Activated CD8-positive, alpha-beta T cell treated with anti-CD3 and anti-CD28 coated beads for 36 hours (primary cell): ENCODE measurements at regions of chr11 and their contacts with region 1.

Region 1: GRCh38 chr11:64304316-64305072 is 830 bp upstream of the ESRRA start:
- DNase-seq: peak; percentile 99
- ATAC-seq: peak; percentile 38
- H3K4me3 Mint-ChIP-seq: peak overlapping the region; percentile 89
- H3K27ac Mint-ChIP-seq: peak overlapping the region; percentile 97
- H3K4me1 Mint-ChIP-seq: peaks cover 29% of the 10 kb centered on the region
- H3K27me3 Mint-ChIP-seq: peaks cover 18% of the 10 kb centered on the region
- CTCF ChIP-seq: peak; percentile 87

Region 2: GRCh38 chr11:64176751-64177150 is 127.7 kb before region 1 on chr11:
- CTCF ChIA-PET with region 1: no interaction called
- POLR2A ChIA-PET with region 1: no interaction called
- intact Hi-C with region 1: no loop called
- DNase-seq: no peak
- ATAC-seq: no peak
- H3K4me3 Mint-ChIP-seq: no peak overlapping the region
- H3K27ac Mint-ChIP-seq: no peak overlapping the region
- H3K4me1 Mint-ChIP-seq: peaks cover 16% of the 10 kb centered on the region
- H3K27me3 Mint-ChIP-seq: no peaks in the 10 kb centered on the region
- CTCF ChIP-seq: no peak

Region 3: DNA sequence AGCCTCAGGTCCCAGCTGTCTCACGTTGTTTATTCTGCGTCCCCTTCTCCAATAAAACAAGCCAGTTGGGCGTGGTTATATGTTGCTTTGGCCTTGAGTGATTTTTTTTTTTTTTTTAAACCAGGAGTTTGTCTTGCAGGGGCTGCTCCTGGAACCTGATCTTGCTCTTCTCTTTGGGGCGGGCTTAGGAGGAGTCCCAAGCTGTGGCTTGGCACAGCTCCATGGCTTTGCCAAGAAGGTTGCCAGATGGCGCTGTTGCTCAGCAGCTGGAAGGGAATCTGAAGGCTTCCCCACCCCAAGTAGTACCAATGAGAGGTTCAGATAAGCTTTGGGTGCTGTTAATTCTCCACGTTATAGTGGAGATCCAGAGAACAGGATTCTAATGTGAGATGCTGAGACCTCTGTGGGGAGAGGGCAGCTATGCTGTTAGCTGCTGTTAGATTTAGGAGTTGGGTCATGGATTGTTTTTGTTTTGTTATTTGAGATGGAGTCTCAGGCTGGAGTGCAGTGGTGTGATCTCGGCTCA is 100.0 kb before region 1 on chr11:
- CTCF ChIA-PET with region 1: interaction called, 111 read pairs
- POLR2A ChIA-PET with region 1: interaction called, 55 read pairs
- intact Hi-C with region 1: loop called (anchors 5 kb)
- DNase-seq: peak; percentile 87
- ATAC-seq: peak; percentile 10
- H3K4me3 Mint-ChIP-seq: peak overlapping the region; percentile 53
- H3K27ac Mint-ChIP-seq: peak overlapping the region; percentile 65
- H3K4me1 Mint-ChIP-seq: peaks cover 44% of the 10 kb centered on the region
- H3K27me3 Mint-ChIP-seq: no peaks in the 10 kb centered on the region
- CTCF ChIP-seq: peak; percentile 62

Region 4: GRCh38 chr11:64240394-64241174 is 63.9 kb before region 1 on chr11 and contains the start of gene FKBP2:
- CTCF ChIA-PET with region 1: interaction called, 12 read pairs
- POLR2A ChIA-PET with region 1: interaction called, 10 read pairs
- intact Hi-C with region 1: loop called (anchors 10 kb)
- DNase-seq: peak; percentile 98
- ATAC-seq: peak; percentile 64
- H3K4me3 Mint-ChIP-seq: peak within 1 kb of the TSS; percentile 93
- H3K27ac Mint-ChIP-seq: peak within 1 kb of the TSS; percentile 98
- H3K4me1 Mint-ChIP-seq: peaks cover 44% of the 10 kb centered on the region
- H3K27me3 Mint-ChIP-seq: no peaks in the 10 kb centered on the region
- CTCF ChIP-seq: no peak
- total RNA-seq, gene FKBP2: 23.5 to 26.9 TPM

Region 5: DNA sequence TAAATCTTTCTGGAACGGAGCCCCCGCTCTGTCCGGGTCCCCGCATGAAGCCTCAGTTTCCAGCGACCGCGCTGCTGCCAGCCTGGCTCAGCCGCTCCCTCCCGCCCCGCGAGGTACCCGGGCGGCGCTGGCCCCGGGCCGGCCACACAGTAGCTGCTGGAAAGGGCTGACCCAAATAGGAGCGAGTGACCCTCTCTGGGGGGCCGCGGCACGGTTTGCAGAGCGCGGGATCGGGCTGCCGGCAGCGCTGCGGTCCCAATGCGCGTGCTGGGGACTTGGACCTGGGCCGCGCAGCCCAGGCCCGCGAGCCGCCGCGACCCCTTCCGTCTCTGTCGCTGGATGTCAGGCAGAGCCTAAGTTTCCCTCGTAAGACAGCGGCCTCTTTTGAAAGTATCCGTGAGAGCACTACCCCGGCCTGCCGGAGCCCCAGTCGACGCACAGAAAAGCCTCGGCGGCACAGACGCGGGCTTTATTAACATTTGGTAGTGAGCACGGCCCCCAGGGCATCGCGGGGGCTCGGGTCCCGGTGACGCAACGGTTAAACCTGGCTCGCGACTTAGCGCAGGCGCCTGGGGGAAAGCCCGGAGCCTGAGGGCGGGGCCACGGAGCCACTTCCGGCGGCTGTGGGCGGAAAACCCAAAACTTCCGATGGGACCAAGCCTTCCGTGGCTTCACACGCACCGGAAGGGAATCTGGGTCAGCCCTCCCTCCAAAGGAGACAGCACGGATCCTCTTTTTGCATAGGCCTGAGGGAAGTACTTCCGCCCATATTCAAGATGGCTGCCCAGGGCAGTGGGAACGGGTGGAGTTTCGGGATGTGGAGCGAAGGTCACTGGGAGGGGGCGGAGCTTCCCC is 34.9 kb before region 1 on chr11:
- CTCF ChIA-PET with region 1: interaction called, 77 read pairs
- POLR2A ChIA-PET with region 1: interaction called, 35 read pairs
- intact Hi-C with region 1: no loop called
- DNase-seq: peak; percentile 98
- ATAC-seq: peak; percentile 73
- H3K4me3 Mint-ChIP-seq: peak overlapping the region; percentile 96
- H3K27ac Mint-ChIP-seq: peak overlapping the region; percentile 95
- H3K4me1 Mint-ChIP-seq: peaks cover 21% of the 10 kb centered on the region
- H3K27me3 Mint-ChIP-seq: no peaks in the 10 kb centered on the region
- CTCF ChIP-seq: no peak

Region 6: GRCh38 chr11:64284048-64284961 is 20.2 kb before region 1 on chr11 and contains the start of gene BAD:
- CTCF ChIA-PET with region 1: interaction called, 77 read pairs
- POLR2A ChIA-PET with region 1: interaction called, 6 read pairs
- intact Hi-C with region 1: no loop called
- DNase-seq: peak; percentile 95
- ATAC-seq: peak; percentile 87
- H3K4me3 Mint-ChIP-seq: peak within 1 kb of the TSS; percentile 80
- H3K27ac Mint-ChIP-seq: peak within 1 kb of the TSS; percentile 88
- H3K4me1 Mint-ChIP-seq: peaks cover 15% of the 10 kb centered on the region
- H3K27me3 Mint-ChIP-seq: no peaks in the 10 kb centered on the region
- CTCF ChIP-seq: no peak
- total RNA-seq, gene BAD: 17.2 to 17.7 TPM

Region 7: GRCh38 chr11:64317957-64318693 is 13.6 kb after region 1 on chr11 and contains the start of gene PRDX5:
- CTCF ChIA-PET with region 1: interaction called, 29 read pairs
- POLR2A ChIA-PET with region 1: interaction called, 35 read pairs
- intact Hi-C with region 1: no loop called
- DNase-seq: peak; percentile 93
- ATAC-seq: peak; percentile 86
- H3K4me3 Mint-ChIP-seq: peak within 1 kb of the TSS; percentile 94
- H3K27ac Mint-ChIP-seq: peak within 1 kb of the TSS; percentile 100
- H3K4me1 Mint-ChIP-seq: peaks cover 22% of the 10 kb centered on the region
- H3K27me3 Mint-ChIP-seq: no peaks in the 10 kb centered on the region
- CTCF ChIP-seq: peak; percentile 24
- total RNA-seq, gene PRDX5: 103 to 105 TPM